ENCODE measurements at regions of chr13 and their contacts with region 1.

Region 1: DNA sequence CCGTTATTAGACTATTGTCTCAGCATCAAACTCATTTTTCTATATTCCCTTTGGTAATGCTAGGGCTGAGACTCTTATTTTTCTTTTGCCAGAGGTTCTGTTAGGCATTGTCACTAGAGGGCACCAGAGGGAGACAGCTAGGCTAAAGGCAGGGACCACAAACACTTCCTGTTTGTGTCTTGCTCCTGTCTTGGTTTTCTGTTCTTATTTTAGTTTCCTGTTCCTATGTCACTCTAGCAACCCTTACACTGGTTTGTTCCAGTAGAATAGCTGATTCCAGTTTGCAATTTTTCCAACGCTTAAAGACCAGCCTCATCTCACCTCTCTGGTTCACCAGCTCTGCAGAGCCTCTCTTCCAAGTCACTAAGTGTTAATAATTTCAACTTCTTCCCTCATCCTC is 772.0 kb downstream of the DIAPH3 start:
- DNase-seq: peak in 8 of 9 experiments; percentile 27 to 84 (median 52)
- ATAC-seq: peak; percentile 95
- H3K4me3 ChIP-seq: no peak overlapping the region
- H3K4me3 Mint-ChIP-seq: no peak overlapping the region
- H3K27ac ChIP-seq: peak overlapping the region in 1 of 2 experiments; percentile 17
- H3K27ac Mint-ChIP-seq: no peak overlapping the region
- H3K4me1 ChIP-seq: peaks cover 11% of the 10 kb centered on the region
- H3K4me1 Mint-ChIP-seq: no peaks in the 10 kb centered on the region
- H3K27me3 ChIP-seq: no peaks in the 10 kb centered on the region
- H3K27me3 Mint-ChIP-seq: peaks cover 2% of the 10 kb centered on the region
- CTCF ChIP-seq: peak; percentile 72

Region 2: GRCh38 chr13:59446391-59446790 is 54.7 kb after region 1 on chr13:
- CTCF ChIA-PET with region 1: no interaction called
- POLR2A ChIA-PET with region 1: no interaction called
- intact Hi-C with region 1: no loop called
- DNase-seq: no peak
- ATAC-seq: no peak
- H3K4me3 ChIP-seq: no peak overlapping the region
- H3K4me3 Mint-ChIP-seq: no peak overlapping the region
- H3K27ac ChIP-seq: no peak overlapping the region
- H3K27ac Mint-ChIP-seq: no peak overlapping the region
- H3K4me1 ChIP-seq: no peaks in the 10 kb centered on the region
- H3K4me1 Mint-ChIP-seq: peaks cover 1% of the 10 kb centered on the region
- H3K27me3 ChIP-seq: no peaks in the 10 kb centered on the region
- H3K27me3 Mint-ChIP-seq: peaks cover 3% of the 10 kb centered on the region
- CTCF ChIP-seq: no peak

Region 3: DNA sequence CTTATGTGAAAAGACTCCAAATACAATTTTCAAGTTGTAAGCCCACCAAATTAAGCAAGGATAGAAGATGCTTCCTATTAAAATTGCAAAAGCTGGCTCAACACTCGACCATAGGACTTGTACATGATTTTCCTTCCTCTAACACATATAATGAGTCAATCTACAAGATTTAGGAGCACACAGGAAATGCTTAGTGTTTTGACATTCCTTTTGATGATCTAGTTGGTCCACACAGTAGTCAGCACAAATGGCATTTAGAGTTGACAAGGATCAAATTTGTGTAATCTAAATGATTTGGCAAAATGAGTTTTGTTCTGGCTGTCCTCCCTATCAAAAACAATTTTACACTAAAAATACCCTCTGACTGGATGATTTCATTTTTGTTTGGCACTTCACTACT is 431.8 kb after region 1 on chr13:
- CTCF ChIA-PET with region 1: no interaction called
- POLR2A ChIA-PET with region 1: no interaction called
- intact Hi-C with region 1: no loop called
- DNase-seq: no peak
- ATAC-seq: no peak
- H3K4me3 ChIP-seq: no peak overlapping the region
- H3K4me3 Mint-ChIP-seq: no peak overlapping the region
- H3K27ac ChIP-seq: no peak overlapping the region
- H3K27ac Mint-ChIP-seq: no peak overlapping the region
- H3K4me1 ChIP-seq: no peaks in the 10 kb centered on the region
- H3K4me1 Mint-ChIP-seq: no peaks in the 10 kb centered on the region
- H3K27me3 ChIP-seq: no peaks in the 10 kb centered on the region
- H3K27me3 Mint-ChIP-seq: no peaks in the 10 kb centered on the region
- CTCF ChIP-seq: no peak

Region 4: GRCh38 chr13:59906413-59907049 is 514.8 kb after region 1 on chr13:
- CTCF ChIA-PET with region 1: no interaction called
- POLR2A ChIA-PET with region 1: no interaction called
- intact Hi-C with region 1: loop called in 1 of 2 experiments (anchors 2 kb)
- DNase-seq: peak in 1 of 9 experiments; percentile 7
- ATAC-seq: no peak
- H3K4me3 ChIP-seq: no peak overlapping the region
- H3K4me3 Mint-ChIP-seq: no peak overlapping the region
- H3K27ac ChIP-seq: no peak overlapping the region
- H3K27ac Mint-ChIP-seq: no peak overlapping the region
- H3K4me1 ChIP-seq: no peaks in the 10 kb centered on the region
- H3K4me1 Mint-ChIP-seq: no peaks in the 10 kb centered on the region
- H3K27me3 ChIP-seq: no peaks in the 10 kb centered on the region
- H3K27me3 Mint-ChIP-seq: no peaks in the 10 kb centered on the region
- CTCF ChIP-seq: no peak

Region 5: GRCh38 chr13:60329221-60329983 is 937.7 kb after region 1 on chr13:
- CTCF ChIA-PET with region 1: no interaction called
- POLR2A ChIA-PET with region 1: no interaction called
- intact Hi-C with region 1: loop called in 1 of 2 experiments (anchors 2 kb)
- DNase-seq: peak in 3 of 9 experiments; percentile 16 to 26 (median 18)
- ATAC-seq: no peak
- H3K4me3 ChIP-seq: no peak overlapping the region
- H3K4me3 Mint-ChIP-seq: no peak overlapping the region
- H3K27ac ChIP-seq: no peak overlapping the region
- H3K27ac Mint-ChIP-seq: no peak overlapping the region
- H3K4me1 ChIP-seq: no peaks in the 10 kb centered on the region
- H3K4me1 Mint-ChIP-seq: no peaks in the 10 kb centered on the region
- H3K27me3 ChIP-seq: no peaks in the 10 kb centered on the region
- H3K27me3 Mint-ChIP-seq: peaks cover 3% of the 10 kb centered on the region
- CTCF ChIP-seq: no peak

Region 6: GRCh38 chr13:60396783-60397703 is 1005.3 kb after region 1 on chr13 and contains the start of gene TDRD3:
- CTCF ChIA-PET with region 1: interaction called, 3 read pairs
- POLR2A ChIA-PET with region 1: interaction called, 3 read pairs
- intact Hi-C with region 1: loop called in 1 of 2 experiments (anchors 1 kb)
- DNase-seq: peak; percentile 55 to 92 (median 79)
- ATAC-seq: peak; percentile 70
- H3K4me3 ChIP-seq: peak within 1 kb of the TSS; percentile 83 to 88
- H3K4me3 Mint-ChIP-seq: peak within 1 kb of the TSS; percentile 94
- H3K27ac ChIP-seq: peak within 1 kb of the TSS; percentile 82 to 83
- H3K27ac Mint-ChIP-seq: peak within 1 kb of the TSS; percentile 96
- H3K4me1 ChIP-seq: peaks cover 24% of the 10 kb centered on the region
- H3K4me1 Mint-ChIP-seq: peaks cover 42% of the 10 kb centered on the region
- H3K27me3 ChIP-seq: no peaks in the 10 kb centered on the region
- H3K27me3 Mint-ChIP-seq: no peaks in the 10 kb centered on the region
- CTCF ChIP-seq: peak; percentile 63
- total RNA-seq, gene TDRD3: 22.1 to 22.4 TPM

Measured in CD8-positive, alpha-beta T cell (primary cell).